ENCODE measurements at regions of chr4 and their contacts with region 1.

Region 1: GRCh38 chr4:158836018-158836369 is 67.2 kb downstream of the FNIP2 start:
- DNase-seq: no peak

Region 2: GRCh38 chr4:158590306-158590705 is 245.7 kb before region 1 on chr4:
- intact Hi-C with region 1: no loop called
- DNase-seq: no peak

Region 3: DNA sequence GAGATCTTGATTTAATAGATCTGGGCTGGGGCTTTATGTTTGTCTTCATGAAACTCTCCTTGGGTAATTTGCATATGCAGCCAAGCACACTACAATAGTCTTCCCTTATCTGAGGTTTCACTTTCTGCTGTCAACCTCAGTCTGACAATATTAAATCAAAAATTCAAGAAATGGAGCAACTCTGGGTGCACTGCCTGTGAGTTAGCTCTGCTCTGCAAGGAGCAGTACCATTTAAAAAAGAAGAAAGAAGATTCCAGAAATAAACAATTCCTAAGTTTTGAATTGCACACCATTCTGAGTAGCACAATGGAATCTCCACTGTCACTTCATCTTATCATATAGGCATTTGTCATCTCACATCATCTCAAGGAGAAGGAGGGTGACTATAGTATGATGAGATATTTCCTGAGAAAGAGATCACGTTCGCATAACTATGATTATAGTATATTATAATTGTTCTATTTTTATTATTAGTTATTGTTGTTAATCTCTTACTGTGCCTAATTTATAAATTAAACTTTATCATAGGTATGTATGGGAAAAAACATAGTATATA is 57.8 kb before region 1 on chr4:
- intact Hi-C with region 1: loop called (anchors 10 kb)
- DNase-seq: no peak

Measured in posterior cingulate gyrus (tissue), 11 donors.